ENCODE measurements at regions of chr16 and their contacts with region 1.

Region 1: DNA sequence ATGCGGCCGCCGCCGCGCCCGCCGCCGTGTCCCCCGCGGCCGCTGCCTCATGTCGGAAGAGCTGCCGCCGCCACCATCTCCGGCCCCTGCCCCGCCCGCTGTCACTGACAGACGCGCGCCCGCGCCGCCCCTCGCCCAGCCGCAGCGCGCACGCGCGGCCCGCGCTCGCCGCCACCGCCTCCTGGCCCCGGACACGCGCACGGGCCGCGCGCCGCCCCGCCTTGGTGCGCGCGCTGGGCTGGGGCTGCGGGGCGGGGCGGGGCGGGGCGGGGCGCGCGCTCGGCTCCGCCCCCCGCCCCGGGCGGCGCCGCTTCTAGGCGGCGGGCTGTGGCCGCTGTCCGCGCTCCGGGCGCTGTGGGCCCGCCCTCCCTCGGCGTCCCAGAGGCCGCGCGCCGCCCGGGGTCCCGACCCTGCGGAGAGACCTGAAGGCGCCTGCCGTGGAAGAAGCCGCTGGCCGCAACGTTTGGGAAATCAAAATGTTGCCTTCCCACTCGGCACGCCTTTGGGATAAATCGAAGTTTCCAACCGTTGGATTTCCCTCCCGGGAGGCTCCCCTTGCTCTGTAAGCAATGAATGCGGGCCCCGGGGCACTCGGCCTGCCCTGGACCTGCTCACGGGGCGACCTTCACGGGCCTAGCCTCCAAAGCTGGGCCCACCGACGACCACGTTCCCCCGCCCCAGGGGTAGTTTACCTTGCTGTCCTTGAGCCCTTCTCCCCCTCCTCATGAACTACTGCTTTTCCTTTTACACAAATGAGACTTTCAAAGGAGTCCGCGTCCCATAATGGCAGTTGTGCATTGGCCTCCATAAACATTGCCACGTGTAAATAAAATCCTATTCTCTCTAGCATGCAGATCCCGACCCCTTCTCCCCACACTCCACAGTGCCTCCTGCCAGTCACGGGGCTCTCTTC is at the start of gene ADCY9:
- DNase-seq: peak; percentile 82 to 91 (median 87)
- ATAC-seq: peak; percentile 25 to 83 (median 78)
- H3K4me3 ChIP-seq: peak within 1 kb of the TSS; percentile 50 to 92 (median 70)
- H3K27ac ChIP-seq: peak within 1 kb of the TSS in 11 of 12 donors; percentile 70 to 87 (median 83)
- H3K4me1 ChIP-seq: peaks cover 0 to 46% (median 32%) of the 10 kb centered on the region in 12 donors
- H3K27me3 ChIP-seq: no peaks in the 10 kb centered on the region
- CTCF ChIP-seq: no peak
- POLR2A ChIP-seq: peak in 1 of 2 donors; percentile 55
- total RNA-seq, gene ADCY9: 39.5 to 85.8 (median 45.3) TPM

Region 2: GRCh38 chr16:3945751-3946603 is 170.6 kb before region 1 on chr16:
- intact Hi-C with region 1: loop called in 1 of 10 experiments (anchors 10 kb)
- DNase-seq: peak in 2 of 5 donors; percentile 54 to 64
- ATAC-seq: no peak
- H3K4me3 ChIP-seq: no peak overlapping the region
- H3K27ac ChIP-seq: peak overlapping the region in 2 of 12 donors; percentile 12 to 36
- H3K4me1 ChIP-seq: peaks cover 4 to 34% (median 23%) of the 10 kb centered on the region in 12 donors
- H3K27me3 ChIP-seq: no peaks in the 10 kb centered on the region
- CTCF ChIP-seq: no peak
- POLR2A ChIP-seq: no peak

Region 3: GRCh38 chr16:3999479-4000325 is 116.9 kb before region 1 on chr16:
- intact Hi-C with region 1: loop called in 2 of 10 experiments (anchors 10 kb)
- DNase-seq: peak; percentile 52 to 81 (median 63)
- ATAC-seq: peak; percentile 17 to 68 (median 56)
- H3K4me3 ChIP-seq: peak overlapping the region in 3 of 12 donors; percentile 6 to 17 (median 10)
- H3K27ac ChIP-seq: peak overlapping the region in 8 of 12 donors; percentile 8 to 72 (median 52)
- H3K4me1 ChIP-seq: peaks cover 0 to 34% (median 15%) of the 10 kb centered on the region in 12 donors
- H3K27me3 ChIP-seq: no peaks in the 10 kb centered on the region
- CTCF ChIP-seq: no peak
- POLR2A ChIP-seq: no peak

Region 4: DNA sequence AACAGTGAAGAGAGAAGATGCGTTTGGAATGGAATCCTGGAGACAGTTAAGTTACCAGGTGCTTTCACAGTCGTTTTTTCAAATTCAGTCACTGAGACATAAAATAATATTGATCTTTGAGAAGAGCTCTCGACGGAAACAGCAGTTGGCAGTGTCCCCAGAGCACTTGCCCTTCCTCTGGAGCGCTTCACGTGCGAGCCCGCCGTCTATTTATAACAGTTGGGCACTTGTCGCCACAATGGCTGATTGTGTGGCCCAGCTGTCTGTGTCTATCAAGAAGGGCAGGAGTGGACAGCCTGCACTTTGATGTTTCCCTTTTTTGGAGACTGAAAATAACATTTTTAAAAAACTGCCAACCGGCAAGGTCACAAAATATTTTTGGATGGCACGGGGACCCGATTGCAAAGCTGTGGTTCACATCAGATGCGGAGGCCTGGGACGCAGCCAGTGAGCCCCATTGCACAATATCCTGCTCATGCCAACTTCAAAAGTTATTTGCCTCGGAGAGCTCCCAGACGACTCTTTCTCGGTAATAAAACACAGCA is 63.2 kb before region 1 on chr16:
- intact Hi-C with region 1: loop called in 2 of 10 experiments (anchors 5 kb)
- DNase-seq: peak; percentile 75 to 90 (median 79)
- ATAC-seq: peak; percentile 88 to 93 (median 92)
- H3K4me3 ChIP-seq: peak overlapping the region in 9 of 12 donors; percentile 9 to 36 (median 26)
- H3K27ac ChIP-seq: peak overlapping the region; percentile 70 to 92 (median 86)
- H3K4me1 ChIP-seq: peaks cover 0 to 34% (median 22%) of the 10 kb centered on the region in 12 donors
- H3K27me3 ChIP-seq: no peaks in the 10 kb centered on the region
- CTCF ChIP-seq: no peak
- POLR2A ChIP-seq: no peak

Region 5: DNA sequence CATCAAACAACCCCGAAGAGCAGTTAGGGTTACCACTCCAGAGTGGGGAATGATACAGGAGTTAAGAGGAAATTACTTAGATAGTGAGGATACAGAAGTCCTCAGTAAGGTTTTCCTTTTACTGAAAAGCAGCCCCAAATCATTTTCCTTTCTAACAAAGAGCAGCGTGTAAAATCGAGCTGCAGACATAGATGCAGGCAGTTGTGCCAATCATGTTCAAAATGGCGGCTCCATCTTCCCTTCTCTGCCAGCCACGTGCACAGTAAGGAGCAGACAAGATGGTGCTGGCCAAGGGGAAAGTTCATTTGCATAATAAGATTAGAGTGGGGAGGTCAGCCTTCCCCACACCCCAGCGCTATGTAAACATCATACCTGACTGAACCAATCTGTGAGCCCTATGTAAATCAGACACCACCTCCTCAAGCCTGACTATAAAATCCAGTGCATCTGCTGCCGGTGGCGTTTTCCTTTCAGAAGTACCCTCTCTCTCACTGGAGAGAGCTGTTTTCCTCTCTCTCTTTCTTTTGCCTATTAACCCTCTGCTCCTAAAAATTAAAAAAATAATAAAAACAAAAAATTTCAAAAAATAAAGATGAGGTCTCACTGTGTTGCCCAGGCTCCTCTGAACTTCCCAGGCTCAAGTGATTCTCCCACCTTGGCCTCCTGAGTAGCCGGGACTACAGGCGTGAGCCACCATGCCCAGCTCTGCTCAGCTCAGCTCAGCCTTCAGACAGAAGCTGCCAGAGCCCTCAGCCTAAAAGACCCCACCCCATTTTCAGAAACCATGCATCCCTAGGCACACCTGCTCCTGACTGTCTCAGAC is 127.9 kb after region 1 on chr16:
- intact Hi-C with region 1: loop called in 2 of 10 experiments (anchors 10 kb)
- DNase-seq: no peak
- ATAC-seq: no peak
- H3K4me3 ChIP-seq: no peak overlapping the region
- H3K27ac ChIP-seq: no peak overlapping the region
- H3K4me1 ChIP-seq: peaks cover 0 to 16% (median 4%) of the 10 kb centered on the region in 12 donors
- H3K27me3 ChIP-seq: no peaks in the 10 kb centered on the region
- CTCF ChIP-seq: no peak
- POLR2A ChIP-seq: no peak